MCF 10A (cell line): ENCODE measurements at regions of chr3 and their contacts with region 1.

Region 1: GRCh38 chr3:134315286-134316106 is 58.8 kb downstream of the AMOTL2 start:
- DNase-seq: peak; percentile 84
- H3K4me3 Mint-ChIP-seq: no peak overlapping the region
- H3K27ac Mint-ChIP-seq: peak overlapping the region; percentile 21
- H3K4me1 Mint-ChIP-seq: peaks cover 47% of the 10 kb centered on the region
- H3K27me3 Mint-ChIP-seq: no peaks in the 10 kb centered on the region
- CTCF ChIP-seq: no peak

Region 2: GRCh38 chr3:134348524-134348923 is 33.0 kb after region 1 on chr3:
- CTCF ChIA-PET with region 1: interaction called, 3 read pairs
- POLR2A ChIA-PET with region 1: interaction called, 15 read pairs
- intact Hi-C with region 1: no loop called
- DNase-seq: peak; percentile 56
- H3K4me3 Mint-ChIP-seq: no peak overlapping the region
- H3K27ac Mint-ChIP-seq: peak overlapping the region; percentile 77
- H3K4me1 Mint-ChIP-seq: peaks cover 39% of the 10 kb centered on the region
- H3K27me3 Mint-ChIP-seq: no peaks in the 10 kb centered on the region
- CTCF ChIP-seq: no peak